ENCODE measurements at regions of chr1 and their contacts with region 1.

Region 1: GRCh38 chr1:5286244-5286643 is 631.8 kb downstream of the AJAP1 start:
- DNase-seq: peak in 4 of 9 donors; percentile 6 to 34 (median 22)
- ATAC-seq: peak; percentile 18
- H3K4me3 ChIP-seq: no peak overlapping the region
- H3K4me3 Mint-ChIP-seq: no peak overlapping the region
- H3K27ac ChIP-seq: no peak overlapping the region
- H3K27ac Mint-ChIP-seq: no peak overlapping the region
- H3K4me1 ChIP-seq: no peaks in the 10 kb centered on the region
- H3K4me1 Mint-ChIP-seq: peaks cover 0 to 23% (median 12%) of the 10 kb centered on the region in 7 donors
- H3K27me3 ChIP-seq: no peaks in the 10 kb centered on the region
- H3K27me3 Mint-ChIP-seq: peaks cover 0 to 12% (median 0%) of the 10 kb centered on the region in 5 donors

Region 2: DNA sequence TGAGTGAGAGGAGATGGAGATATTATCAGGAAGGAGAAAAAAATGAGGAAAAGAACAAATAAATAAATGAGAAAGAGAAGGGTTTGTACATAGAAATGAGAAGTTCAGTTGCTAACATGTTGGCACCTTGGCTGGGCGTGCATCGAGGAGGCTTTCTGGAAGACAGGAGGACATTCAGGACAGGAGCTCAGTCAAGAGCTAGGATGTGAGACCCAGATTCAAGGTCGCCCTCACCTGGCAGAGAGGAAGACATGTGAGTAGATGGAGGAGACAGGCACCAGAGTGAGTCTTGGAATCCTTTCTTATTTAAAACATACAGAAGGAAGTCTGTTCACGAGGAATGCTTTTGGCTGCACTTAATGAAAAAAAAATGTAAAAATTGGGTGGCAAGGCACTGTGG is 65.1 kb after region 1 on chr1:
- CTCF ChIA-PET with region 1: interaction called, 8 read pairs
- POLR2A ChIA-PET with region 1: no interaction called
- intact Hi-C with region 1: loop called in 1 of 2 experiments (anchors 1 kb)
- DNase-seq: no peak
- ATAC-seq: no peak
- H3K4me3 ChIP-seq: no peak overlapping the region
- H3K4me3 Mint-ChIP-seq: no peak overlapping the region
- H3K27ac ChIP-seq: no peak overlapping the region
- H3K27ac Mint-ChIP-seq: no peak overlapping the region
- H3K4me1 ChIP-seq: peaks cover 0 to 4% of the 10 kb centered on the region in 2 donors
- H3K4me1 Mint-ChIP-seq: peaks cover 3 to 26% (median 15%) of the 10 kb centered on the region in 7 donors
- H3K27me3 ChIP-seq: no peaks in the 10 kb centered on the region
- H3K27me3 Mint-ChIP-seq: peaks cover 0 to 9% (median 0%) of the 10 kb centered on the region in 5 donors

Region 3: DNA sequence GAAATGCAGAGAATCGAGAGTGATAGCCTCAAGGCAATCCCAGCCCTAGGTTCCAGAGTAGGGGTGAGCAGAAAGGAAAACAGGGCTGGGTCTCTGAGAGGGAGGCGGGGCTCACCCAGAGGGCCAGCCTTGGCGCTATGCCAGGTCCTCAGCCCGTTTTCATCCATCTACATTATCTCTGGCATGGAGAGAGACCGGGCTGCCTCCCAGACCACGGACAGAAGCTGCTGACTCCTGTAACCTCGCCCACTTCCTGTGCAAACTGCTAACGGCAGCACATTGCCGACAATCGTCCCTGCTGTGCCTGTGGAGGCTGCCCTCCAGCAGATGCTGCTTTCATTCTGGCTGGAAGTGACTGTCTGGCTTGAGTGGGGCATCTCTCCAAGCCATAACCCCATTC is 136.9 kb after region 1 on chr1:
- CTCF ChIA-PET with region 1: interaction called, 4 read pairs
- POLR2A ChIA-PET with region 1: no interaction called
- intact Hi-C with region 1: loop called in 1 of 2 experiments (anchors 5 kb)
- DNase-seq: peak in 6 of 9 donors; percentile 21 to 39 (median 23)
- ATAC-seq: peak; percentile 65
- H3K4me3 ChIP-seq: peak overlapping the region; percentile 40
- H3K4me3 Mint-ChIP-seq: peak overlapping the region; percentile 42 to 77 (median 62)
- H3K27ac ChIP-seq: no peak overlapping the region
- H3K27ac Mint-ChIP-seq: peak overlapping the region in 2 of 9 donors; percentile 19 to 50
- H3K4me1 ChIP-seq: peaks cover 17 to 18% of the 10 kb centered on the region in 2 donors
- H3K4me1 Mint-ChIP-seq: peaks cover 17 to 36% (median 28%) of the 10 kb centered on the region in 7 donors
- H3K27me3 ChIP-seq: no peaks in the 10 kb centered on the region
- H3K27me3 Mint-ChIP-seq: peaks cover 4 to 46% (median 11%) of the 10 kb centered on the region in 5 donors

Region 4: DNA sequence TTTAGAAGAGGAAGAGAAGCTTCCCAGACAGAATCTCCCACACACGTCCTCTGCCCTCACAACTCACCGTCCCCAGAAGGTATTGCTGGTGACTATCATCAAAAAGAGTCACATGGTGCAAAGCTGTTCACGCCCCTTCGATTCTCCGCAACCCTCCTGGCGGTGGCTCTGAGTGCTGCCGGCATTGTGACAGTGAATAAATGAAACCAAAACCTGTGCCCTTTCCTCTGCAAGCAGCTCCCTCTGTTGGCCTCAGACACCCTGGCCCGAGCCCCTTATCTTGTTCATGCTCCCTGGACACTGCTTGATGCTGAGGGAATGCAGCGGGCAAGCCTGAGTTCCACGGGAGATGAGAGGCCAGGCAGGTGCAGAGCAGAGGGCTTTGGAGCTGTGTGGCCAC is 195.6 kb after region 1 on chr1:
- CTCF ChIA-PET with region 1: interaction called, 5 read pairs
- POLR2A ChIA-PET with region 1: no interaction called
- intact Hi-C with region 1: loop called in 1 of 2 experiments (anchors 10 kb)
- DNase-seq: peak in 7 of 9 donors; percentile 9 to 50 (median 26)
- ATAC-seq: peak; percentile 73
- H3K4me3 ChIP-seq: peak overlapping the region; percentile 18
- H3K4me3 Mint-ChIP-seq: peak overlapping the region in 4 of 10 donors; percentile 5 to 69 (median 49)
- H3K27ac ChIP-seq: no peak overlapping the region
- H3K27ac Mint-ChIP-seq: peak overlapping the region in 1 of 9 donors; percentile 17
- H3K4me1 ChIP-seq: peaks cover 0 to 4% of the 10 kb centered on the region in 2 donors
- H3K4me1 Mint-ChIP-seq: peaks cover 0 to 14% (median 11%) of the 10 kb centered on the region in 7 donors
- H3K27me3 ChIP-seq: no peaks in the 10 kb centered on the region
- H3K27me3 Mint-ChIP-seq: peaks cover 0 to 22% (median 0%) of the 10 kb centered on the region in 5 donors

Region 5: DNA sequence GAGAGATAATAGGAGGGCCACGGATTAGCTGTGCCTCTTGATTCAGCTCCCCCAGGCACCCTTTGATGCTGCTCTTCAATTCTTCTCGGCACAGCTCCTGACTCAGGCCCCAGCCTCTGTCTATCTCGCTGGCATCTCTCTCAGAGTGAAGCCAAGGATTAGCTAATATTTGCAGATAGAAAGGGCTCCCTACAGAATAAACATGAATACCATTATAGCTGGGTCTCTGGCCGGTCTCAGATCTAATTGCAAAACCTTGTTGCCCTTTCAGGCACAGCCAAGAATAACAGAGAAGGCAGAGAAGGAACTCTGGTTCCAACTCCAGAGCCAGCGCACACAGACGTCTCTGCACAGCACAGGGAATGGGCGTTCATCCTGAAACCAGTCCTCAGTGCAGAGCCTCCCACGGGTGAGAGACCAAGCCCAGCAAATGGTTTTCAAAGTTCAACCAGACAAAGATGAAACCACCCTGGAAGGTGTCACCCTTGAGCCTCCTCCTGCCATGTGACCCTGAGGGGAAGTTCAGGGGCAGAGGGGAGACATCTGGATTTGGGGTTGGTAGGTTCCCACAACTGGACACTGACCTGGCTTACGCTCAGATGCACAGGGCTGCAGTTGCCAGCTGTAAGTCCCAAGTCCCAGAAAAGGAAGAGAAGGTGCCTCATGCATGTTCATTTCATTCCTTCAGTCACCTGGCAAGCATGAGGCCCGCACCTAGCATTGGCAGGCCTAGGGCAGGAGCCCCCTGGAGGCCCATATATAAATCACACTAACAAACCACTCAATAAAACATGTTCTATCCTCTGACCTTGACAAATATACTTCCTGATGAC is 312.0 kb after region 1 on chr1:
- CTCF ChIA-PET with region 1: no interaction called
- POLR2A ChIA-PET with region 1: no interaction called
- intact Hi-C with region 1: loop called in 1 of 2 experiments (anchors 2 kb)
- DNase-seq: peak in 1 of 9 donors; percentile 3
- ATAC-seq: no peak
- H3K4me3 ChIP-seq: no peak overlapping the region
- H3K4me3 Mint-ChIP-seq: no peak overlapping the region
- H3K27ac ChIP-seq: no peak overlapping the region
- H3K27ac Mint-ChIP-seq: no peak overlapping the region
- H3K4me1 ChIP-seq: no peaks in the 10 kb centered on the region
- H3K4me1 Mint-ChIP-seq: peaks cover 0 to 3% (median 0%) of the 10 kb centered on the region in 7 donors
- H3K27me3 ChIP-seq: no peaks in the 10 kb centered on the region
- H3K27me3 Mint-ChIP-seq: peaks cover 0 to 51% (median 12%) of the 10 kb centered on the region in 5 donors

Measured in naive thymus-derived CD4-positive, alpha-beta T cell (primary cell).